ENCODE measurements at regions of chr4 and their contacts with region 1.

Region 1: DNA sequence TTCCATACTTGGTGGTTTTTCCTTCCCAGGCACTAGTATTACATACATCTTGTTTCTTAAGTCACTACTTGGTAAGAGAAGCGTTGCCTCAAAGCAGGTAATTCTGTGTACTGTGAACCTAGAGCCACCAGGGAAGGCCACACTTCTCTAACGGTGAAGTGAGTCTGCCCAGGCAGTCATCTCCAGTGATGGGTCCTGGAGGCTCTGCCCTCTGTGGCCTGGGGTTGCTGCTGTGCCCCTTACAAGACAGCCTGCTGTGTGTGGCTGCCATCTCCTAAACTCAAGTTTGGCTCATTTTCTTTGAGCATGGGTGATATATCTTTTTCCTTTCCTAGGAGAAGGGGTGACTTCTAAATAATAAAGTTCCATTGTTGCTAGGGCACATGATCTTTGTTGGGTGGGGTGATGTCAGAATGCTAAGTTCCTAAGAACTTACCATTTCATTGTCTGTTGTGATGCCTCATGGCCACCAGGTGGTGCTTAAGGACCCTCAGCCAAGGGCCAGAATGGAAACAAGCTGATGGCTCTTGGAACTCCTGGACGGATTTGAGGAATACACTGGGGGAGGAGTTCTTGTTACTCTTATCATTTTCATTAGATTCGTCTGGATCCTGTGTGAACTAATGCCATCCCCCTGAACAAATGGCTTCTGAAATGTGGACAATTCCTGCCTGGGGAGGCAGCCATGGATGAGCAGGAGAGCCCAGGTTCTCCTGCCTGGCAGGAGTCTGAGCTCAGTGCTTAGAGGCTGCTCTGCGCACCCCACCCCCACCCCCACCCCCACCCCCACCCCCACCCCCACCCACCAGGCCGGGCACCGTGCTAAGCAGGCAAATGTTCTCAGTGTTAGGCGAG is 41.1 kb upstream of the WDR1 start:
- DNase-seq: peak; percentile 55
- ATAC-seq: peak; percentile 80
- H3K4me3 ChIP-seq: no peak overlapping the region
- H3K27ac ChIP-seq: no peak overlapping the region
- H3K4me1 ChIP-seq: peaks cover 19% of the 10 kb centered on the region
- H3K27me3 ChIP-seq: peaks cover 0 to 11% of the 10 kb centered on the region in 2 experiments; a peak in 2 of 5 replicates
- CTCF ChIP-seq: peak; percentile 87
- EP300 ChIP-seq: no peak
- POLR2A ChIP-seq: no peak
- RAD21 ChIP-seq: peak; percentile 66

Region 2: DNA sequence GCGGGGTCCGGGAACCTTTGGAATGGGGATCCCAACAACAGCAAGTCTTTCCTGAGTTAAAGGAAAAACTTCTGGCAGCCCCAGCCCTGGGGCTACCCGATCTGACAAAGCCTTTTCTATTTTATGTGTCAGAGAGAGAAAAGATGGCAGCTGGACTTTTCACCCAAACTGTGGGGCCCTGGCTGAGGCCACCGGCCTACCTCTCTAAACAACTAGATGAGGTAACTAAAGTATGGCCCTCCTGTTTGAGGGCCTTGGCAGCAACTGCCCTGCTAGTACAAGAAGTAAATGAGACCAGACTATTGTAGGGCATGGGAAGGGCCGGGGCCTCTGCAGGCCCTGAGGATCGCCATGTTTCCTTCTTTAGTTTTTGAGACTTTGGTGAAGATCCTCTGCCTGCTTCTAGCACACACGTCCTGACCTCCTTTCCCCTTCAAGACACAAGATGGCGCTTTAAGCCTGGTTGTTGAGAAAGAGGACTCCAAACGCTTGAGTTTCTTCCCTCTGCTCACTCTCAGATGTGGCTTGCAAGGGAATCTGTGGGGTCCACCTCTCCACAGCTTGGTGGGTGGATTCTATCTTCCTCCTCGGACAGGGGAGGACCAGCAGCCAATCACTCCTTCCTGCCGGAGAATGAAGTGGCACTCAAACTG is 394.8 kb before region 1 on chr4:
- CTCF ChIA-PET with region 1: no interaction called
- POLR2A ChIA-PET with region 1: no interaction called
- in situ Hi-C with region 1: no loop called
- intact Hi-C with region 1: loop called (anchors 5 kb)
- DNase-seq: peak; percentile 71
- ATAC-seq: peak; percentile 78
- H3K4me3 ChIP-seq: no peak overlapping the region; a peak in 1 of 6 replicates
- H3K27ac ChIP-seq: no peak overlapping the region
- H3K4me1 ChIP-seq: peaks cover 5% of the 10 kb centered on the region; the same call in 1 of the 2 replicates
- H3K27me3 ChIP-seq: no peaks in the 10 kb centered on the region; a peak in 1 of 5 replicates
- CTCF ChIP-seq: peak; percentile 85
- EP300 ChIP-seq: no peak
- POLR2A ChIP-seq: no peak
- RAD21 ChIP-seq: peak; percentile 51

Region 3: GRCh38 chr4:10063544-10064300 is 94.0 kb before region 1 on chr4:
- CTCF ChIA-PET with region 1: no interaction called
- POLR2A ChIA-PET with region 1: no interaction called
- in situ Hi-C with region 1: no loop called
- intact Hi-C with region 1: no loop called
- DNase-seq: peak; percentile 67
- ATAC-seq: peak; percentile 99
- H3K4me3 ChIP-seq: no peak overlapping the region
- H3K27ac ChIP-seq: no peak overlapping the region
- H3K4me1 ChIP-seq: peaks cover 23% of the 10 kb centered on the region
- H3K27me3 ChIP-seq: no peaks in the 10 kb centered on the region
- CTCF ChIP-seq: peak; percentile 96
- EP300 ChIP-seq: no peak
- POLR2A ChIP-seq: no peak
- RAD21 ChIP-seq: peak; percentile 97

Region 4: GRCh38 chr4:10116580-10117358 is 40.9 kb before region 1 on chr4 and contains the start of gene WDR1:
- CTCF ChIA-PET with region 1: no interaction called
- POLR2A ChIA-PET with region 1: interaction called, 15 read pairs
- in situ Hi-C with region 1: no loop called
- intact Hi-C with region 1: no loop called
- DNase-seq: peak; percentile 89
- ATAC-seq: peak; percentile 86
- H3K4me3 ChIP-seq: peak within 1 kb of the TSS; percentile 82 to 93 (median 88)
- H3K27ac ChIP-seq: peak within 1 kb of the TSS; percentile 85
- H3K4me1 ChIP-seq: peaks cover 89% of the 10 kb centered on the region
- H3K27me3 ChIP-seq: no peaks in the 10 kb centered on the region
- CTCF ChIP-seq: no peak
- EP300 ChIP-seq: peak in 1 of 2 experiments; percentile 10; a peak in 1 of 4 replicates
- POLR2A ChIP-seq: peak in 1 of 2 experiments; percentile 97; a peak in 2 of 4 replicates
- RAD21 ChIP-seq: 0 out of 2 replicates have a peak, but pooled peaks have one; percentile 21
- total RNA-seq, gene WDR1: 106 and 120 TPM in 2 replicates

Region 5: DNA sequence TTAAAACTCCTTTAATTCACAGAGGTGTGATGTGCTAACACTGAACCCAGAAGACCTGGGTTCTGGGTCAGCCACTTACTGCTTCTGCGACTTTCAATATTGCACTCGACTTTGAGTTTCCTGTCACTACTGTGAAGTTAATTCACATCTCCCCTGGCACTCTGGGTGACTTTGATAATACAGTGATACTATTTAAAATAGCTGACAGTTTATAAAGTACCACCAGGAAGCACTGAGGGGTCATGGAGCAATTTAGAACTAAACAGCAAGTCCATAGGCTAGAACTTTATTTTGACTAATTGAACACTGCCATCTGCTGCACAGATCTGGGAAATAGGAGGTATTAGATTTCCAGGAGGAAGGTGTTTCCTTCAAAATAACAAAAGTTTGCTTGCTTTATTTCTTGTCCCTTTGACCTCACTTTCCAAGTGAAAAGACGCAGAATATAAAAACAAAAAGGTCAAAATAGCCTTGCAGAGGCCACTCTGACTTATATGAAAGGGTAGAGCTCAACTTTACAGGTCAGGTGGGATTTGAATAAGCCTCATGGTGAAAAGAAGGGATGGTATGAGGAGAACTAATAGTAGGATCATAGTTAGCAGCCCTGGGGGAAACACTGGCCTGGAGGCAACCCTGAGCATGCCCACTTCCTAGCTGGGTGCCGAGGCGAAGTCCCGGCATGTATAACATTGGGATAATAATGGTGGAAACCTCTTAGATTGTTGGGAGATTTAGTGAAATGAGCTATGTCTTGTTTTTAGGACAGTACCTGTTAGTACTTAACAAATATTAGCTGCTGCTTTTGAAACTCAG is 246.1 kb after region 1 on chr4:
- CTCF ChIA-PET with region 1: interaction called, 13 read pairs
- POLR2A ChIA-PET with region 1: no interaction called
- in situ Hi-C with region 1: loop called (anchors 5 kb)
- intact Hi-C with region 1: loop called (anchors 2 kb)
- DNase-seq: peak; percentile 29
- ATAC-seq: peak; percentile 65
- H3K4me3 ChIP-seq: no peak overlapping the region
- H3K27ac ChIP-seq: no peak overlapping the region
- H3K4me1 ChIP-seq: no peaks in the 10 kb centered on the region
- H3K27me3 ChIP-seq: no peaks in the 10 kb centered on the region
- CTCF ChIP-seq: peak; percentile 61
- EP300 ChIP-seq: no peak
- POLR2A ChIP-seq: no peak
- RAD21 ChIP-seq: no peak

Region 6: GRCh38 chr4:10554694-10555093 is 397.0 kb after region 1 on chr4:
- CTCF ChIA-PET with region 1: interaction called, 7 read pairs
- POLR2A ChIA-PET with region 1: no interaction called
- in situ Hi-C with region 1: loop called (anchors 5 kb)
- intact Hi-C with region 1: loop called (anchors 1 kb)
- DNase-seq: peak; percentile 38
- ATAC-seq: peak; percentile 77
- H3K4me3 ChIP-seq: no peak overlapping the region
- H3K27ac ChIP-seq: no peak overlapping the region
- H3K4me1 ChIP-seq: no peaks in the 10 kb centered on the region
- H3K27me3 ChIP-seq: no peaks in the 10 kb centered on the region
- CTCF ChIP-seq: peak; percentile 76
- EP300 ChIP-seq: no peak
- POLR2A ChIP-seq: no peak
- RAD21 ChIP-seq: 0 out of 2 replicates have a peak, but pooled peaks have one; percentile 29

Region 7: GRCh38 chr4:11424000-11424399 is 1266.3 kb after region 1 on chr4:
- CTCF ChIA-PET with region 1: no interaction called
- POLR2A ChIA-PET with region 1: no interaction called
- in situ Hi-C with region 1: loop called (anchors 25 kb)
- intact Hi-C with region 1: no loop called
- DNase-seq: peak; percentile 39
- ATAC-seq: peak; percentile 79
- H3K4me3 ChIP-seq: no peak overlapping the region
- H3K27ac ChIP-seq: no peak overlapping the region
- H3K4me1 ChIP-seq: no peaks in the 10 kb centered on the region
- H3K27me3 ChIP-seq: 0 out of 5 replicates have a peak, but pooled peaks cover 0 to 1% of the 10 kb centered on the region in 2 experiments
- CTCF ChIP-seq: peak; percentile 59
- EP300 ChIP-seq: no peak
- POLR2A ChIP-seq: no peak
- RAD21 ChIP-seq: no peak